Vagina (tissue), 2 donors: ENCODE measurements at regions of chr12 and their contacts with region 1.

Region 1: DNA sequence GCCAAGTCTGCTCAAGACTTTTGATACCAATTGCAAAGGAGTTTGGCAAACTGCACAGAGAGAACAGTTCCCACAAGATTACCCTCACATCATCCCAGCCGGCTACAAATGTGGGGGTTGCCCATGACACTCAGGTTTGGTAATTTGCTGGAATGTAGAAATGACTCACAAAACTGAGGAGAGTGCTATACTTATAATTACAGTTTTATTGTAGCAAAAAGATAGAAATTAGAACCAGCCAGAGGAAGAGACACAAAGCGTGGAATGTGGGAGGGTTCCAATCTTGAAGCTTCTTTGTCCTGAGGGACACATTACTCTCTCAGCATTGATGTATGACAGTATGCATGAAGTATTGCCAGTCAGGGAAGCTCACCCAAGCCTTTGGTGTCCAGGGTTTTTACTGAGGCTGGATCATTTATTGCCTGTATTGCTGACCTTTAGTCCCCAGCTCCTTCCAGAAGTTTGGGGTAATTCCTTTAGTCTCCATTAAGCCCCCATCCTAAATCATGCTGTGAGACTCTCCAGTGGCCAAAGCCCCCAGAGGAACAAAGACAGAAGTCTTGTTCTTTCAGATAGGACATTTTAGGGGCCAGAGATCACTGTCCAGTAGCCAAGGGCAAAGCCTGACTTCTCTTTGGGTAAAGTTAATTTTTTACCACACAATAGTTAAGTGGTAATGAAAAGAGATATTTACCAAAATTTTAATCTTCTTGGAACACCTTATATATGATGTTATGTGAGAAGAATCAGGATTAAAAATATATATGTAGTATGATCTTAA is 9.9 kb downstream of the TBK1 start:
- DNase-seq: no peak
- H3K4me3 ChIP-seq: no peak overlapping the region
- H3K27ac ChIP-seq: no peak overlapping the region
- H3K4me1 ChIP-seq: peaks cover 19% of the 10 kb centered on the region
- H3K27me3 ChIP-seq: no peaks in the 10 kb centered on the region
- CTCF ChIP-seq: no peak
- POLR2A ChIP-seq: no peak

Region 2: GRCh38 chr12:64390275-64390851 is 71.5 kb before region 1 on chr12 and contains the start of gene C12orf56:
- intact Hi-C with region 1: loop called (anchors 2 kb)
- DNase-seq: peak in 1 of 2 donors; percentile 52
- H3K4me3 ChIP-seq: peak within 1 kb of the TSS; percentile 45 to 47
- H3K27ac ChIP-seq: no peak within 1 kb of the TSS
- H3K4me1 ChIP-seq: peaks cover 18% of the 10 kb centered on the region
- H3K27me3 ChIP-seq: no peaks in the 10 kb centered on the region
- CTCF ChIP-seq: no peak
- POLR2A ChIP-seq: no peak
- total RNA-seq, gene C12orf56: 7.4 TPM